Dorsolateral prefrontal cortex (tissue), 120 donors: ENCODE measurements at regions of chr11 and their contacts with region 1.

Region 1: GRCh38 chr11:30586251-30587144 is at the start of gene MPPED2:
- DNase-seq: peak in 9 of 10 donors; percentile 7 to 52 (median 31)
- H3K4me3 ChIP-seq: peak within 1 kb of the TSS; percentile 49 to 84 (median 75)
- H3K27ac ChIP-seq: peak within 1 kb of the TSS in 58 of 59 donors; percentile 20 to 95 (median 90)
- H3K27me3 ChIP-seq: peaks cover 0 to 20% (median 0%) of the 10 kb centered on the region in 45 donors
- CTCF ChIP-seq: peak in 29 of 56 donors; percentile 13 to 53 (median 30)
- total RNA-seq, gene MPPED2: 12.5 to 52.0 (median 29.4) TPM

Region 2: GRCh38 chr11:30358536-30358935 is 228.0 kb before region 1 on chr11:
- intact Hi-C with region 1: loop called in 1 of 2 experiments (anchors 10 kb)
- DNase-seq: peak in 3 of 10 donors; percentile 44 to 62 (median 47)
- H3K4me3 ChIP-seq: no peak overlapping the region
- H3K27ac ChIP-seq: no peak overlapping the region
- H3K27me3 ChIP-seq: peaks cover 0 to 5% (median 0%) of the 10 kb centered on the region in 45 donors
- CTCF ChIP-seq: no peak

Region 3: DNA sequence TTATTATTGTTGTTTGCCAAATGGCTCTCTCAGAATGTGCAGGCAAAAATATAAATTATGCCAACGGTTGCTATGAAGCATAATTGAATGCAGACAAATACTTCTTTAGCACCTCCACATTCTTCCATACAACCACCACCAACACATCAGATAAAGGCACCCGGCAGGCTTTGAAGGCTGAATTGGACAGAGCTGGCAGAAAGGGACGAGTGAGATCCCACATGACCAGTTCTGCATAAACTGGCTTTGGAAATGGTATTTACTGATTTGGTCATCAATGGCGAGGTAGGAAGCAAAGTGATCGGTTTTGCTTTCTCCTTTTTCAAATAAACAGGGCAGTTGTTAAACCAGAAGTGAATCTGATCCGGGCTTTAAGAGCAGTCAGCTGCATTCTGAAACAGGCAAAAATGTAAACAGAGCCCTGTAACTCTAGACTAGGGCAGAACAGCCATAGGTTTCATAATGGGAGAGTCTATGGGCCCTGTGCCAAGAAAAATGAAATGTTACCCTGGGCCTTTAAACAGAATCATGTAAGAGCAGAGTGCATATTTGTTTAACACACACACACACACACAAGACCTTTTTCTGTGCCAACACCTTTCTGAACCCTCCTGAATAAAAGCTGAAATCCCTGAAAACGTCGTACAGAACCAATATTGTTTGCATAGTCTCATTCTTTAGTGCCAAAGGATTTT is 98.0 kb before region 1 on chr11:
- intact Hi-C with region 1: loop called in 1 of 2 experiments (anchors 10 kb)
- DNase-seq: no peak
- H3K4me3 ChIP-seq: peak overlapping the region in 12 of 59 donors; percentile 1 to 36 (median 8)
- H3K27ac ChIP-seq: peak overlapping the region in 30 of 59 donors; percentile 7 to 67 (median 30)
- H3K27me3 ChIP-seq: no peaks in the 10 kb centered on the region
- CTCF ChIP-seq: no peak

Region 4: DNA sequence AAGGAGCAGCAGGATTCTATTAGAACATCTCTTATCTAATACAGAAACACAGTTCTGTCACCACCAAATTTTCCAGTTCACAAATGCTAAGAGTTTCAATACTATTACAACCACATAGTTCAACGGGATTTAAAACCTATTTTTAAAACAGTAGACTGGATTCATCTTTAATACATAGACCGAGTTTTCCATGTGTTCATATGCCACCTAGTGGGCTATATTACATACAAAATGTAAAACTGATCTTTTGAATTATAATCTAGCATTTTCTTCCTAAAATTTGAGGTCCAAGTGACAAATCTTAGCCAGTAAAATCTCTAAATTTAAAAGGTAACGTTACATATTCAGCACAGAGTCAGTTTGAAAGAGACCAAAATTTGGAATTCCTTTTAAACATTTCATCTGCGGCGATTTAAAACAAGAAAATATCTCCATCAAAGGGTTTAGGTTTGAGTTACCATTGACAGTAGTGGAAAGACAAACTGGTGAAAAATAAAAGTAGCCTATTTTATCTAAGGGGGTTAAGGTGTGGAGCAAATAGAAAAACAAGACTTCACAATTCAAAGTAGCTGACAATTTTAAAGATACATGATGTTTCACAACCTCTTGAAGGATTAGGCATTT is 269.0 kb after region 1 on chr11:
- intact Hi-C with region 1: loop called in 1 of 2 experiments (anchors 10 kb)
- DNase-seq: no peak
- H3K4me3 ChIP-seq: peak overlapping the region in 2 of 59 donors; percentile 14 to 28
- H3K27ac ChIP-seq: no peak overlapping the region
- H3K27me3 ChIP-seq: peaks cover 0 to 8% (median 0%) of the 10 kb centered on the region in 45 donors
- CTCF ChIP-seq: peak in 55 of 56 donors; percentile 40 to 81 (median 58)